Naive thymus-derived CD4-positive, alpha-beta T cell (primary cell): ENCODE measurements at regions of chr1 and their contacts with region 1.

Region 1: GRCh38 chr1:201023517-201023902 is at the start of gene KIF21B:
- DNase-seq: peak; percentile 86 to 95 (median 91)
- ATAC-seq: peak; percentile 91
- H3K4me3 ChIP-seq: peak within 1 kb of the TSS; percentile 93
- H3K4me3 Mint-ChIP-seq: peak within 1 kb of the TSS; percentile 91 to 100 (median 96)
- H3K27ac ChIP-seq: peak within 1 kb of the TSS; percentile 83
- H3K27ac Mint-ChIP-seq: peak within 1 kb of the TSS; percentile 93 to 100 (median 98)
- H3K4me1 ChIP-seq: peaks cover 39 to 59% of the 10 kb centered on the region in 2 donors
- H3K4me1 Mint-ChIP-seq: peaks cover 51 to 77% (median 70%) of the 10 kb centered on the region in 7 donors
- H3K27me3 ChIP-seq: no peaks in the 10 kb centered on the region
- H3K27me3 Mint-ChIP-seq: no peaks in the 10 kb centered on the region
- total RNA-seq, gene KIF21B: 68.3 to 97.6 (median 73.4) TPM

Region 2: GRCh38 chr1:200154069-200154767 is 869.3 kb before region 1 on chr1:
- CTCF ChIA-PET with region 1: no interaction called
- POLR2A ChIA-PET with region 1: no interaction called
- intact Hi-C with region 1: loop called in 1 of 2 experiments (anchors 10 kb)
- DNase-seq: peak in 8 of 9 donors; percentile 26 to 65 (median 50)
- ATAC-seq: peak; percentile 88
- H3K4me3 ChIP-seq: no peak overlapping the region
- H3K4me3 Mint-ChIP-seq: peak overlapping the region; percentile 45 to 87 (median 67)
- H3K27ac ChIP-seq: peak overlapping the region; percentile 64
- H3K27ac Mint-ChIP-seq: peak overlapping the region; percentile 74 to 99 (median 89)
- H3K4me1 ChIP-seq: peaks cover 27 to 30% of the 10 kb centered on the region in 2 donors
- H3K4me1 Mint-ChIP-seq: peaks cover 18 to 54% (median 29%) of the 10 kb centered on the region in 7 donors
- H3K27me3 ChIP-seq: no peaks in the 10 kb centered on the region
- H3K27me3 Mint-ChIP-seq: peaks cover 0 to 2% (median 0%) of the 10 kb centered on the region in 5 donors

Region 3: DNA sequence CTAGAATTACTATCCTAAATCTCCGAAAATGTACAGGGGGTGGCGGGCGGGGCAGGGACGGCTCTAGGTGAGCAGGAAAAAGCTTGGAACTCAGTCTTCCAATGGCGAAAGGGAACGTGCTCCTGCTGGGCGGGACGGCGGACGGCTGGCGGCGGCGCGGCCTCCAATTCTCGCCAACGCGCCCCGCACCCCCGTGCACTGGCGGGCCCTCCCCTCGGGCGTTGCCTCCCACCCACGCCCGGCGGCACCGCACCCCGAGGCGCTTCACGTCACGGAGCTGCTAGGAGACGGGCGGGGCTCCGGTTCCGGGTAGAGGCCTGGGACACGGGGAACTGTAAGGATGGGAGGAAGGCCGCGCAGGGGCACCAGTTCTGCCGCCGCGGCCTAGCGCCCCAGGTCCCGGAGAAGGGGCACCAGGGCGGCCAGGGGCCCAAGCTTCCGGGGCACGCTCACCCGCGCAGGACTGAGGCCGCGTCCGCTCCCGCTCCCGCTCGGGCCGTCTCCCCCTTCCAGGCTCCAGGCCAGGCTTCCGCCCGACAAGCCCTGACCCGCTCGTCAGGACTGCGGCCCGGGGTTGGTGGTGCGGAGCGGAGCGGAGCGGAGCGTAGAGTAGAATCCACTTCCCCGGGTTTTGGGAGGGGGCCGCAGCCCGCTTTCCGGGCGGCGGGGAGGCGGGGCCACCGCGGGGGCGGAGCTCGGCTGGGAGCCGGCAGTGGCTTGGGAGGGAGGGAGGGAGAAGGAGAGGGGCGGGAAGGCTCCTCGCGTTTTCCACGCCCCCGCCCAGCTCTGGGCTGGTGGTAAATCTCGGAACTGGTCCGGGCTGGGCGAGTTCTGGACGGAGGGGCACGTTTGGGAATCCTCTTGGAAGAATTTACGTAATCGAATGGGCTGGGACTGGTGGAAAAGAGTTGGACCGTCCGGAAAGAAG is 353.9 kb before region 1 on chr1 and contains the start of gene DDX59:
- CTCF ChIA-PET with region 1: no interaction called
- POLR2A ChIA-PET with region 1: no interaction called
- intact Hi-C with region 1: loop called (anchors 1 to 2 kb)
- DNase-seq: peak; percentile 81 to 95 (median 85)
- ATAC-seq: peak; percentile 92
- H3K4me3 ChIP-seq: peak within 1 kb of the TSS; percentile 93
- H3K4me3 Mint-ChIP-seq: peak within 1 kb of the TSS; percentile 96 to 99 (median 98)
- H3K27ac ChIP-seq: peak within 1 kb of the TSS; percentile 98
- H3K27ac Mint-ChIP-seq: peak within 1 kb of the TSS; percentile 89 to 99 (median 97)
- H3K4me1 ChIP-seq: peaks cover 13 to 16% of the 10 kb centered on the region in 2 donors
- H3K4me1 Mint-ChIP-seq: peaks cover 20 to 60% (median 51%) of the 10 kb centered on the region in 7 donors
- H3K27me3 ChIP-seq: no peaks in the 10 kb centered on the region
- H3K27me3 Mint-ChIP-seq: no peaks in the 10 kb centered on the region
- total RNA-seq, gene DDX59: 20.6 to 41.3 (median 31.1) TPM

Region 4: GRCh38 chr1:200971955-200972711 is 51.4 kb before region 1 on chr1:
- CTCF ChIA-PET with region 1: interaction called, 20 read pairs
- POLR2A ChIA-PET with region 1: interaction called, 5 read pairs
- intact Hi-C with region 1: loop called in 1 of 2 experiments (anchors 1 kb)
- DNase-seq: peak; percentile 48 to 73 (median 59)
- ATAC-seq: peak; percentile 71
- H3K4me3 ChIP-seq: no peak overlapping the region
- H3K4me3 Mint-ChIP-seq: no peak overlapping the region
- H3K27ac ChIP-seq: no peak overlapping the region
- H3K27ac Mint-ChIP-seq: peak overlapping the region in 2 of 9 donors; percentile 38 to 84
- H3K4me1 ChIP-seq: no peaks in the 10 kb centered on the region
- H3K4me1 Mint-ChIP-seq: peaks cover 0 to 6% (median 0%) of the 10 kb centered on the region in 7 donors
- H3K27me3 ChIP-seq: no peaks in the 10 kb centered on the region
- H3K27me3 Mint-ChIP-seq: no peaks in the 10 kb centered on the region

Region 5: DNA sequence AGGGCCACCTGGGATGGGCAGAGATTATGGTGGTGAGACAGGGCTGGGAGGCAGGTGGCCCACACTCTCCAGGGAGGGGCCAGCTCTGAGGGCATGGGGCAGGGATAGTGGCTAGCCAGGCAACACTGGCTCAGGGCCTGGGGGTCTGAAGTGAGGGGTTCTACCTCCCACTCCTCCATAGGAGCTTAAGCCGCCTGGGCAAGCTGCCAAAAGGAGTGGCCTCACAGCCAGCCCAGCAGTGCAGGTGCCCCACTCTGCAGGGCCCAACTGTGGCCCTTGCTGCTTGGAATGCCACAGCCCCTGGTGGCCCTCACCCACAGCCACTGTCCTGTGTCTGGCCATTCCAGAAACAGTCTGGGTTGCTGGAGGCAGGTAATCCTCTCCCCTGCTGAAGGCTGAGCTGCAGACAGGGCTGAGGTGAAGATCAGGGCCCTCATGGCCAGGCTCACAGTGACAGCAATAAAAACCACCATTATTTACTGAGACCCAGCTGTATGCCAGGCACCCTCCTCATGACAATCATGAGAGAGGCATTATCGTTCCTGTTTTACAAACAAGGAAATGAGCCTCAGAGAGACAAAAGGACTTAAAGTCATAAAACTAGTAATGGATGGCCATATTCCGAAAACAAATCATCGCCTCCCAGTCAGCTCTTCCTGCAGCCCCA is 31.0 kb before region 1 on chr1:
- CTCF ChIA-PET with region 1: interaction called, 4 read pairs
- POLR2A ChIA-PET with region 1: interaction called, 3 read pairs
- intact Hi-C with region 1: loop called in 1 of 2 experiments (anchors 1 kb)
- DNase-seq: no peak
- ATAC-seq: no peak
- H3K4me3 ChIP-seq: no peak overlapping the region
- H3K4me3 Mint-ChIP-seq: no peak overlapping the region
- H3K27ac ChIP-seq: no peak overlapping the region
- H3K27ac Mint-ChIP-seq: peak overlapping the region in 1 of 9 donors; percentile 17
- H3K4me1 ChIP-seq: no peaks in the 10 kb centered on the region
- H3K4me1 Mint-ChIP-seq: peaks cover 0 to 5% (median 0%) of the 10 kb centered on the region in 7 donors
- H3K27me3 ChIP-seq: no peaks in the 10 kb centered on the region
- H3K27me3 Mint-ChIP-seq: no peaks in the 10 kb centered on the region

Region 6: GRCh38 chr1:201114236-201115131 is 91.0 kb after region 1 on chr1:
- CTCF ChIA-PET with region 1: interaction called, 3 read pairs
- POLR2A ChIA-PET with region 1: interaction called, 7 read pairs
- intact Hi-C with region 1: loop called in 1 of 2 experiments (anchors 1 kb)
- DNase-seq: peak; percentile 58 to 78 (median 72)
- ATAC-seq: peak; percentile 90
- H3K4me3 ChIP-seq: peak overlapping the region; percentile 85
- H3K4me3 Mint-ChIP-seq: peak overlapping the region; percentile 86 to 94 (median 91)
- H3K27ac ChIP-seq: peak overlapping the region; percentile 65
- H3K27ac Mint-ChIP-seq: peak overlapping the region in 8 of 9 donors; percentile 74 to 92 (median 82)
- H3K4me1 ChIP-seq: peaks cover 0 to 7% of the 10 kb centered on the region in 2 donors
- H3K4me1 Mint-ChIP-seq: peaks cover 1 to 23% (median 14%) of the 10 kb centered on the region in 7 donors
- H3K27me3 ChIP-seq: no peaks in the 10 kb centered on the region
- H3K27me3 Mint-ChIP-seq: peaks cover 0 to 43% (median 0%) of the 10 kb centered on the region in 5 donors

Region 7: GRCh38 chr1:201506556-201507359 is 483.2 kb after region 1 on chr1 and contains the start of gene CSRP1:
- CTCF ChIA-PET with region 1: no interaction called
- POLR2A ChIA-PET with region 1: no interaction called
- intact Hi-C with region 1: loop called (anchors 10 kb)
- DNase-seq: peak; percentile 64 to 84 (median 80)
- ATAC-seq: peak; percentile 97
- H3K4me3 ChIP-seq: peak within 1 kb of the TSS; percentile 87
- H3K4me3 Mint-ChIP-seq: peak within 1 kb of the TSS; percentile 88 to 94 (median 91)
- H3K27ac ChIP-seq: peak within 1 kb of the TSS; percentile 74
- H3K27ac Mint-ChIP-seq: peak within 1 kb of the TSS; percentile 83 to 97 (median 91)
- H3K4me1 ChIP-seq: peaks cover 20 to 28% of the 10 kb centered on the region in 2 donors
- H3K4me1 Mint-ChIP-seq: peaks cover 30 to 61% (median 57%) of the 10 kb centered on the region in 7 donors
- H3K27me3 ChIP-seq: no peaks in the 10 kb centered on the region
- H3K27me3 Mint-ChIP-seq: no peaks in the 10 kb centered on the region
- total RNA-seq, gene CSRP1: 24.2 to 83.1 (median 37.7) TPM